ENCODE measurements at regions of chr17 and their contacts with region 1.

Region 1: DNA sequence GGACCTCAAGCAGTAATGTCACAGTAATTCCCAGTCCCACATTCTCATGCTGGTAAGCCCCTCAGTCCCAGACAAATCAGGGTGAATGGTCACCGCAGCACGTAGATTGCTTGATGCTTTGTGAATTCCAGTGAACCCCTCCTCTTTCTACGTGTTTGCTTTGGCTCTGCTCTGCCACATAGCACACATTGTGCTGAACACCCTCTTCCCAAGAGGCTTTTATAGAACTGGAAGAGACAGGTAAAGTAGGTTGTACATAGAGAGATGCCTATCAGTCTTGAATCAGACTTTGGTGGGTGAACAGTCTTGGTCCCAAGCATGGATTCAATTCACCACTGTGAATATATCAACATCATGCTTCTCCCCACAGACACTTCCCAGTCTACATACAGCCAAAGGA is 579 bp upstream of the KRTAP9-6 start:
- DNase-seq: no peak
- ATAC-seq: no peak
- H3K4me3 Mint-ChIP-seq: no peak overlapping the region
- H3K27ac Mint-ChIP-seq: no peak overlapping the region
- H3K4me1 Mint-ChIP-seq: no peaks in the 10 kb centered on the region
- H3K27me3 Mint-ChIP-seq: peaks cover 28% of the 10 kb centered on the region
- CTCF ChIP-seq: no peak

Region 2: DNA sequence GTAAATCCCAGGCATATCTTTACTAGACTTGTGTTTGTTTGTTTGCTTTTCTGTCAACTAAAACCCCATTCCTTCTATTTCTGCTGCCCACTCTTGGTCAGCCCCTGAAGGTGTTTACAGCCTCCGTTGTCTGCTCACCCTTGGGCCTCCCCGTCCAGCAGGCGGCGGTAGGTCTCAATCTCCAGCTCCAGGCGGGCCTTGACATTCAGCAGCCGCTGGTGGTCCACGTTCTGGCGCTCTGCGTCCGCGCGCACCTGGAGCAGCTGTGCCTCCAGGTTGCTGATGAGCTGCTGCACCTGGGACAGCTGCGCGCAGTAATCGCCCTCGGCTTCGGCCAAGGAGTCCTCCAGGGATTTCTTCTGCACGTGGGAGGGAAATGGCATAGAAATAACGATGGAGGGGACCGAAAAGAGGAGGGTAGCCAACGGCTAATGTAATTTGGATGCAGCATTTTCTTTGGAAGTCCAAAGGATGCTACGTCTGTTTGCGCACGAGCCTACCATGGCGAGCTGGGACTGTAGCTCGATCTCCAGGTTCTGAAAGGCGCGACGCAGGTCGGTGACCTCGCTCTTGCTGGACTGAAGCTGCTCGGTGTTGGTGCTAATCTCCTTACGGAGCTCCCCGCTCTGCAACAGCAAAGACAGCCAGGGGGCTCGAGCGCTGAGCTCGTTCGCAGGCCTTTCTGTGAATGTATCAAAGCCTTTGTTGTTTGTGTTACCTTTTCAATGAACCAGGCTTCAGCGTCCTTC is 401.4 kb before region 1 on chr17:
- CTCF ChIA-PET with region 1: no interaction called
- POLR2A ChIA-PET with region 1: no interaction called
- intact Hi-C with region 1: no loop called
- DNase-seq: no peak
- ATAC-seq: no peak
- H3K4me3 Mint-ChIP-seq: no peak overlapping the region
- H3K27ac Mint-ChIP-seq: no peak overlapping the region
- H3K4me1 Mint-ChIP-seq: no peaks in the 10 kb centered on the region
- H3K27me3 Mint-ChIP-seq: peaks cover 23% of the 10 kb centered on the region
- CTCF ChIP-seq: no peak

Region 3: GRCh38 chr17:41278176-41278955 is 13.8 kb after region 1 on chr17:
- CTCF ChIA-PET with region 1: no interaction called
- POLR2A ChIA-PET with region 1: no interaction called
- intact Hi-C with region 1: loop called (anchors 1 kb)
- DNase-seq: no peak
- ATAC-seq: no peak
- H3K4me3 Mint-ChIP-seq: no peak overlapping the region
- H3K27ac Mint-ChIP-seq: no peak overlapping the region
- H3K4me1 Mint-ChIP-seq: no peaks in the 10 kb centered on the region
- H3K27me3 Mint-ChIP-seq: peaks cover 29% of the 10 kb centered on the region
- CTCF ChIP-seq: no peak

Region 4: GRCh38 chr17:41367426-41368075 is 103.0 kb after region 1 on chr17:
- CTCF ChIA-PET with region 1: no interaction called
- POLR2A ChIA-PET with region 1: no interaction called
- intact Hi-C with region 1: no loop called
- DNase-seq: no peak
- ATAC-seq: no peak
- H3K4me3 Mint-ChIP-seq: no peak overlapping the region
- H3K27ac Mint-ChIP-seq: no peak overlapping the region
- H3K4me1 Mint-ChIP-seq: no peaks in the 10 kb centered on the region
- H3K27me3 Mint-ChIP-seq: peaks cover 4% of the 10 kb centered on the region
- CTCF ChIP-seq: no peak